AG04450 (cell line): ENCODE measurements at regions of chr11 and their contacts with region 1.

Region 1: GRCh38 chr11:78564490-78565467 is 9.9 kb downstream of the NARS2 start:
- DNase-seq: peak; percentile 49
- H3K4me3 ChIP-seq: no peak overlapping the region
- H3K27ac ChIP-seq: no peak overlapping the region
- H3K27me3 ChIP-seq: no peaks in the 10 kb centered on the region
- CTCF ChIP-seq: peak; percentile 73

Region 2: GRCh38 chr11:78228467-78228866 is 336.3 kb before region 1 on chr11:
- CTCF ChIA-PET with region 1: interaction called, 89 read pairs
- POLR2A ChIA-PET with region 1: no interaction called
- DNase-seq: peak; percentile 15
- H3K4me3 ChIP-seq: no peak overlapping the region
- H3K27ac ChIP-seq: no peak overlapping the region
- H3K27me3 ChIP-seq: no peaks in the 10 kb centered on the region
- CTCF ChIP-seq: peak; percentile 62

Region 3: GRCh38 chr11:78416305-78417178 is 148.2 kb before region 1 on chr11:
- CTCF ChIA-PET with region 1: interaction called, 55 read pairs
- POLR2A ChIA-PET with region 1: no interaction called
- DNase-seq: peak; percentile 51
- H3K4me3 ChIP-seq: peak overlapping the region; percentile 68
- H3K27ac ChIP-seq: peak overlapping the region; percentile 97
- H3K27me3 ChIP-seq: no peaks in the 10 kb centered on the region
- CTCF ChIP-seq: peak; percentile 54

Region 4: GRCh38 chr11:78432058-78432515 is 132.7 kb before region 1 on chr11:
- CTCF ChIA-PET with region 1: interaction called, 10 read pairs
- POLR2A ChIA-PET with region 1: no interaction called
- DNase-seq: no peak
- H3K4me3 ChIP-seq: no peak overlapping the region
- H3K27ac ChIP-seq: no peak overlapping the region
- H3K27me3 ChIP-seq: no peaks in the 10 kb centered on the region
- CTCF ChIP-seq: peak; percentile 50

Region 5: DNA sequence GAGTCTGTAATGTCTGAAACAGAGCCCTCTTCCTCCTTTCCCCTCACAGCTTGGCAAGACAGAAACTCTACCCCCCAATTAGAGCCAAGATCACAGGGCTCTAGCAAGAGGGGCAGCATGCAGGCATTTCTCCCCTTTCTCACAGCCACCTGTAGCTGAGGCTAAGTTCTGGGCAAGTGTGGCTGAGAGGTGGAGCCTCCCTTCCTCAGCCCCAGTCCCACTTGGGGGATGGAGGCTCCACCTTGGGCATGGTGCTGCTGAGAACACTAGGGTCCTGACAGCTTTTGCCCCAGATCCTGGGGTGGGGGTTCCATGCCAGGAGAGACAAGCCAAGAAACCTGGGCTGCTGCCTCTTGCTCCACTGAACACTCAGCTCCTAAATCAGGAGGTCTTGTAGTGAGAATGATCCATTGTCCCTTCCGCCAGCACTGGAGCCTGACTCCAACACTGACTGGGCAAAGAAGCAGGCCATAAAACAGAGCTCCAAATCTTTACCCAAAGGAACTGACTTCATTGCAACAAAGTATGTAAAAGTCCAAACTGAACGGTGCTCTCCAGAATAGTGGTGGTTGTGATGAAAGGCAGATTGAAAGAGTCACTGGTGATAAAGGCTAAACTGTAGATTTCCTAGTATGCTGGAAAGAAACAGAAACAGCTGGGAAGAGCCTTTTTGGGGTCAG is 15.7 kb before region 1 on chr11:
- CTCF ChIA-PET with region 1: interaction called, 16 read pairs
- POLR2A ChIA-PET with region 1: no interaction called
- DNase-seq: no peak
- H3K4me3 ChIP-seq: no peak overlapping the region
- H3K27ac ChIP-seq: no peak overlapping the region
- H3K27me3 ChIP-seq: no peaks in the 10 kb centered on the region
- CTCF ChIP-seq: no peak

Region 6: GRCh38 chr11:79263001-79263400 is 698.2 kb after region 1 on chr11:
- CTCF ChIA-PET with region 1: no interaction called
- POLR2A ChIA-PET with region 1: no interaction called
- DNase-seq: peak; percentile 53
- H3K4me3 ChIP-seq: no peak overlapping the region
- H3K27ac ChIP-seq: peak overlapping the region; percentile 24
- H3K27me3 ChIP-seq: no peaks in the 10 kb centered on the region
- CTCF ChIP-seq: no peak